ENCODE measurements at regions of chr5 and their contacts with region 1.

Region 1: GRCh38 chr5:175478384-175479124 is at the start of gene SFXN1:
- DNase-seq: peak; percentile 75
- H3K4me3 Mint-ChIP-seq: peak within 1 kb of the TSS; percentile 89
- H3K27ac Mint-ChIP-seq: peak within 1 kb of the TSS; percentile 90
- H3K4me1 Mint-ChIP-seq: peaks cover 18% of the 10 kb centered on the region
- H3K27me3 Mint-ChIP-seq: peaks cover 29% of the 10 kb centered on the region
- CTCF ChIP-seq: no peak
- total RNA-seq, gene SFXN1: 86.4 and 91.8 TPM in 2 replicates

Region 2: GRCh38 chr5:175494280-175495183 is 16.0 kb after region 1 on chr5:
- CTCF ChIA-PET with region 1: interaction called, 5 read pairs
- POLR2A ChIA-PET with region 1: interaction called, 13 read pairs
- intact Hi-C with region 1: no loop called
- DNase-seq: peak; percentile 74
- H3K4me3 Mint-ChIP-seq: peak overlapping the region; percentile 20
- H3K27ac Mint-ChIP-seq: peak overlapping the region; percentile 62
- H3K4me1 Mint-ChIP-seq: peaks cover 14% of the 10 kb centered on the region
- H3K27me3 Mint-ChIP-seq: no peaks in the 10 kb centered on the region
- CTCF ChIP-seq: no peak

Region 3: GRCh38 chr5:176436661-176437071 is 958.1 kb after region 1 on chr5:
- CTCF ChIA-PET with region 1: no interaction called
- POLR2A ChIA-PET with region 1: no interaction called
- intact Hi-C with region 1: no loop called
- DNase-seq: peak; percentile 19
- H3K4me3 Mint-ChIP-seq: peak overlapping the region; percentile 43
- H3K27ac Mint-ChIP-seq: no peak overlapping the region
- H3K4me1 Mint-ChIP-seq: peaks cover 13% of the 10 kb centered on the region
- H3K27me3 Mint-ChIP-seq: no peaks in the 10 kb centered on the region
- CTCF ChIP-seq: no peak

Measured in MCF 10A (cell line).